A673 (cell line): ENCODE measurements at regions of chr7 and their contacts with region 1.

Region 1: DNA sequence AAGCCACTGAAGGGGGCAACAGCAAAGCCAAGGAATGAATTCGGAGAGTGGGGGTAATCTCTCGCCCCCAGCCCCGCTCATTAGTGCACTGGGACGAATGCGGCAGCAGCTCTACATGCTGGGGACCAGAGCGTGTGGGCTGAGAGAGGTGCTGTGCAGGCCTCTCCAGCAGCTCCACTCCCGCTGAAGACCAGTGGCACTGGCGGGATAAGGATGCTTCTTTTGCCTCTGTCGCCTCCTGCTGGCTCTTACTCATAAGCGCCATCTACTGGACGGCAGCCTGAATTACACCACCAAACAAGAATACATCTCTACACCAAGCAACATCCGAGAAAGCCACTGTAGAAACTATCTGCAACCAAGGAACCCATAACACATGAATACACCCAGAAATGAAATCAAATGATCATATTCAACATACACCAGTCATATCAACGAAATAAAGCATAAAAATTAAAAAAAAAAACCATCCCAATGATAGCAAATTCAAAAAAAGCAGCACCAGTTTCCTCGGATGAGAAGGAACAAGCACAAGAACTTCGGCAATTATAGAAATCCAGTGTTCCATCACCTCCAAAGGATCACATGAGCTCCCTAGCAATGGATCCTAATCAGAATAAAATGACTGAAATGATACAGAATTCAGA is 79.0 kb upstream of the TMEM168 start:
- DNase-seq: peak; percentile 75
- H3K4me3 ChIP-seq: no peak overlapping the region
- H3K27ac ChIP-seq: no peak overlapping the region
- H3K4me1 ChIP-seq: no peaks in the 10 kb centered on the region
- H3K27me3 ChIP-seq: no peaks in the 10 kb centered on the region
- CTCF ChIP-seq: peak; percentile 97

Region 2: DNA sequence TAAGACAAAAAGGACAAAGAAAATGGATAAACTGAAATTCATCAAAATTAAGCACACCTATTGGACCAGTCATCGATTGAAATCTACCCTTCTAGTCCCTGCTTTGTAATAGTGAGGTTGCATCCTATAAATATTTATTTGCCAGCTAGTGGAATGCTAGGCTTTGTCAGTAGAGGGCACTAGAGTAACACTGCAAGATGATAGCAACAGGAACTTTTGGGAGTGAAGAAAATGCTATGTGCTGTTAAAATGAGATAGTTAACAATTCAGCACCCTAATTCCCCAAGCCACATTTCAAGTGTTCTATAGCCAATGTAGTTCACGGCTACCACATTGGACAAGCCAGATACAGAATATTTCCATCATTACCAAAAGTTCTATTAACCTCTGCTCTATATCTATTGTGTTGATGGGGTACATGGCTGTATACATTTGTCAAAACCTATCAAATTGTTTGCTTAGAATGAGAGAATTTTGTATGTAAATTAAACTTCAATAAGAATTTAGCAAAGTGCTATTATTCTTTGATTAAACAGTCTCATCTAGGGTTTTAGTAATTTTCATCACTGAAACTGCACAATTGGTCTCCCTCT is 318.7 kb before region 1 on chr7:
- CTCF ChIA-PET with region 1: interaction called, 3 read pairs
- POLR2A ChIA-PET with region 1: no interaction called
- intact Hi-C with region 1: loop called (anchors 1 kb)
- DNase-seq: peak; percentile 76
- H3K4me3 ChIP-seq: no peak overlapping the region
- H3K27ac ChIP-seq: no peak overlapping the region
- H3K4me1 ChIP-seq: no peaks in the 10 kb centered on the region
- H3K27me3 ChIP-seq: peaks cover 14% of the 10 kb centered on the region
- CTCF ChIP-seq: peak; percentile 94

Region 3: GRCh38 chr7:112833082-112833481 is 36.2 kb before region 1 on chr7:
- CTCF ChIA-PET with region 1: no interaction called
- POLR2A ChIA-PET with region 1: no interaction called
- intact Hi-C with region 1: no loop called
- DNase-seq: no peak
- H3K4me3 ChIP-seq: no peak overlapping the region
- H3K27ac ChIP-seq: no peak overlapping the region
- H3K4me1 ChIP-seq: no peaks in the 10 kb centered on the region
- H3K27me3 ChIP-seq: no peaks in the 10 kb centered on the region
- CTCF ChIP-seq: no peak

Region 4: DNA sequence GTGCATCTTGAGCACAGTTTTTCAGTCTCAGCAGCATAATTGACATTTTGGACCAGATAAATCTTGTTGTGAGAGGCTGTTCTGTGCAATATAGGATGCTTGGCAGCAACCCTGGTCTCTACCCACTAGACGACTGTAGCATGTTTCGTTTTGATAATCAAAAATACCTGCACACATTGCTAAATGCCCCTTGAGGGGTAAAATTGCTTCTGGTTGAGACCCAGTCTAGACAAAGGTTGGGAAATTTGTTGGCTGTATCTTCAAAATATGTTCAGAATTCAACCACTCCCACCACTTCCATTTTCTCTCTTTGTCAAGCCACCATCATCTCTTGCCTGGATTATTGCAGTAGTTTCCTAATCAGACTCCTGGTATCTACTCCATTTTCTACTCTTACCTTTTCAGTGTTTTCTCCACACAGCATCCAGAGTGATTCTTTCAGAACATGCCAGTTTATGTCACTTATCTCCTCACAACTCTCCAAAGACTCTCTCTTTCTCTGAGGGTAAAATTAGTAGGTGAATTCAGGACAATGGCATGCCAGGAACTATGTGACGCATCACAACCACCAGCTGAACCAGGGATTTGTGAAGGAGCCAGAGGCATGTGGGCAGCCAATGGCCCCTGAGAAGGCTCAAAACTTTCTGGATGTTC is 126.1 kb after region 1 on chr7:
- CTCF ChIA-PET with region 1: no interaction called
- POLR2A ChIA-PET with region 1: no interaction called
- intact Hi-C with region 1: no loop called
- DNase-seq: no peak
- H3K4me3 ChIP-seq: no peak overlapping the region
- H3K27ac ChIP-seq: no peak overlapping the region
- H3K4me1 ChIP-seq: peaks cover under 1% of the 10 kb centered on the region
- H3K27me3 ChIP-seq: peaks cover 3% of the 10 kb centered on the region
- CTCF ChIP-seq: no peak